A549 (cell line): ENCODE measurements at regions of chrX and their contacts with region 1.

Region 1: DNA sequence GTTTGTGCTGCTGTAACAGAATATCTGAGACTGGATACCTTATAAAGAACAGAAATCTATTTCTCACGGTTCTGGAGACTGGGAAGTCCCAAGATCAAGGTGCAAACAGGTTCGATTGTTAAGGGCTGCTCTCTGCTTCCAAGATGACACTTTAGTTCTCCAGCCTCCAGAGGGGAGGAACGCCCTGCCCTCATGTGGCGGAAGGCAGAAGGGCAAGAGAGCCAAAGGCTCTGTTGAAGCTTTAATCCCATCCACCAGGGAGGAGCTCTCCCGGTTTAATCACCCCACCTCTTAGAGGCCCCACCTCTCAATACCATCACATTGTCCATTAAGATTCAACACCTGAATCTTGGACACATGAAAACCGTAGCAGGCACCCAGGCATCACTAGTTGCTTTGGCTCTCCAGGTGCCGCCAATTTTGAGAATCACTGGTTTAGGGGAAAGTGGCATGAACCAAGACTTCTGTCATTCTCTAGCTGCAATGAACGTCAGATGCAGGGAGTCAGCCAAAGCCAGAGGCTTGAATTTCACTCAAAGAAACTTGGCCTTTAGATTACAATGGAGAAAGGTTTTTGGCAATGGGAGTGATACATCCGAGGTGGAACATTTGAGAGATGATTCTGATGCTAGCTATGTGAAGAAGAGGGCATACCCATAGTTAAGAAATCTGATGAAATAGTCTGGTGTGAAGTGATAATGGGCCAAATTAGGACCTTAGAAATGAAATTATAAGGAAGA is 15.7 kb downstream of the FHL1 start:
- DNase-seq: peak; percentile 59 to 60
- ATAC-seq: peak; percentile 99 to 100
- H3K4me3 ChIP-seq: no peak overlapping the region
- H3K27ac ChIP-seq: 0 out of 6 replicates have a peak overlapping the region, but pooled peaks of 1 of the 2 experiments have one; percentile 8
- H3K4me1 ChIP-seq: no peaks in the 10 kb centered on the region
- CTCF ChIP-seq: peak; percentile 62
- EP300 ChIP-seq: no peak
- POLR2A ChIP-seq: no peak
- RAD21 ChIP-seq: peak; percentile 61 to 70

Region 2: DNA sequence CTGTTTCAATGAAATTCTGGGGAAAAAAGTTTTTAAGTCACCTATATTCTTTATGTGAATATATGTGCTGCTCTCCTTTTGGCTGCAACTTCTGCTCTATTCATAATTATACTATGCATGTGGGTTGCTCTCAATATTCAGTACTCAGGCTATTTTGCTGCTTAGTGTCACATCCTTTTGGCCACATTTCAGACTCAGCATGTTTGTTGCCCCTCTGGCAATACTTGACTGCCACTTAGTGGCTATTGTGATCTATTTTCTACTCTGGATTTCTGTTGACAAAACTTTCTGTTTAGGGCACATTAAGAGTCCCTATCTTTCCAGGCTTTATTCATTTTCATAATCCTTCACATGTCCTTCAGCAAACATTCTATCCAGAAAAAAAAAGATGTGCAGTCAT is 465.4 kb before region 1 on chrX:
- CTCF ChIA-PET with region 1: no interaction called
- POLR2A ChIA-PET with region 1: no interaction called
- DNase-seq: no peak
- ATAC-seq: no peak
- H3K4me3 ChIP-seq: no peak overlapping the region
- H3K27ac ChIP-seq: no peak overlapping the region
- H3K4me1 ChIP-seq: no peaks in the 10 kb centered on the region
- CTCF ChIP-seq: 0 out of 3 replicates have a peak, but pooled peaks have one; percentile 9
- EP300 ChIP-seq: no peak
- POLR2A ChIP-seq: no peak
- RAD21 ChIP-seq: peak in 1 of 2 experiments; percentile 27; a peak in 2 of 5 replicates

Region 3: DNA sequence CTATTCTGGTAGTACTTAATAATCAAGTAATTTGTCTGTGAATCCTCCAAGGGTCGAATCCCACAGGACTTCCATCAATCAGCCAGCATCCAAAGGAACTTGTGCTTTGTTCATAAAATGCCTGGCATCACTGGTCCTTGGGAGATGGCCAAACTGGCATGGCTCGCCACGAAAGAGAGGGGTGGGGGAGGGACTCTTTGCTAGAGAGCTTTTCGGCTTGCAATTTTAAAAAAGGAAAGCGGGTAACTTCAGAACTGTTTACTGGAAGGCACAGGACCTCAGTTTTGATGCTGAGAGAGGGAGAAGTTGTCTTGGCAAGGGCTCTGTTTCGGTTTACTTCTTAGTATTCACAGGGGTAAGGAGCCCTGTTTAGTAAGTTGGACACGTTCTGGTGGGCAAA is 95.0 kb before region 1 on chrX:
- CTCF ChIA-PET with region 1: interaction called, 11 read pairs
- POLR2A ChIA-PET with region 1: no interaction called
- DNase-seq: no peak
- ATAC-seq: no peak
- H3K4me3 ChIP-seq: no peak overlapping the region
- H3K27ac ChIP-seq: no peak overlapping the region
- H3K4me1 ChIP-seq: no peaks in the 10 kb centered on the region
- CTCF ChIP-seq: no peak
- EP300 ChIP-seq: no peak
- POLR2A ChIP-seq: no peak
- RAD21 ChIP-seq: no peak

Region 4: GRCh38 chrX:136147315-136147901 is 15.6 kb before region 1 on chrX and contains the start of gene FHL1:
- CTCF ChIA-PET with region 1: interaction called, 11 read pairs
- POLR2A ChIA-PET with region 1: no interaction called
- DNase-seq: peak in 1 of 2 experiments; percentile 18
- ATAC-seq: peak; percentile 78 to 82
- H3K4me3 ChIP-seq: peak within 1 kb of the TSS; percentile 93
- H3K27ac ChIP-seq: peak within 1 kb of the TSS; percentile 87 to 98
- H3K4me1 ChIP-seq: no peaks in the 10 kb centered on the region; the same call in 1 of the 3 replicates
- CTCF ChIP-seq: no peak
- EP300 ChIP-seq: no peak
- POLR2A ChIP-seq: no peak
- RAD21 ChIP-seq: no peak
- polyA plus RNA-seq, gene FHL1: 32.2 and 38.5 TPM in 2 replicates

Region 5: DNA sequence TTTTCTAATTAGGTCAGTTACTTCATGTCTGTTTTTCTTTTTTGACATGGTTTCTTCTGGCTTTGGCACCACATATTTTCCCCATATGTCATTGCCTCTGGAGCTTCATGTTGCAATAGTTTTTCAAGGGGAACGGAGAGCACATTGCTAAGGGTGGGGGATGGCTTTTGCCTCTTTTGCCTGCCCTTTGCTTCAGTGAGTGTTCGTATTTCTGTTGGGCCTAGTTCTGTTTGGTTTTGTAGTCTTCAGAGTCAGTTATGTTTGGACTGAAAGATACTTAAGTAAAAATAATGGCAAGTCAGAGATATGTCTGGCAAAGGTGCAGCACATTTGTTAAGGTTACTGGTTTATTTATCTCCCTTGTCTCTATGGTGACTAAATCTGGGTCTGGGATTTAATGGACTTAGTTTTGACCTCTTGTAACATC is 13.4 kb after region 1 on chrX:
- CTCF ChIA-PET with region 1: interaction called, 14 read pairs
- POLR2A ChIA-PET with region 1: no interaction called
- DNase-seq: peak in 1 of 2 experiments; percentile 6
- ATAC-seq: peak in 1 of 2 experiments; percentile 42; a peak in 2 of 6 replicates
- H3K4me3 ChIP-seq: no peak overlapping the region
- H3K27ac ChIP-seq: peak overlapping the region in 1 of 2 experiments; percentile 67; a peak in 2 of 6 replicates
- H3K4me1 ChIP-seq: peaks cover 12% of the 10 kb centered on the region
- CTCF ChIP-seq: no peak
- EP300 ChIP-seq: no peak
- POLR2A ChIP-seq: no peak
- RAD21 ChIP-seq: no peak

Region 6: GRCh38 chrX:136199365-136199764 is 36.4 kb after region 1 on chrX:
- CTCF ChIA-PET with region 1: interaction called, 21 read pairs
- POLR2A ChIA-PET with region 1: no interaction called
- DNase-seq: no peak
- ATAC-seq: no peak
- H3K4me3 ChIP-seq: no peak overlapping the region
- H3K27ac ChIP-seq: no peak overlapping the region
- H3K4me1 ChIP-seq: peaks cover 33% of the 10 kb centered on the region
- CTCF ChIP-seq: no peak
- EP300 ChIP-seq: no peak
- POLR2A ChIP-seq: no peak
- RAD21 ChIP-seq: no peak

Region 7: DNA sequence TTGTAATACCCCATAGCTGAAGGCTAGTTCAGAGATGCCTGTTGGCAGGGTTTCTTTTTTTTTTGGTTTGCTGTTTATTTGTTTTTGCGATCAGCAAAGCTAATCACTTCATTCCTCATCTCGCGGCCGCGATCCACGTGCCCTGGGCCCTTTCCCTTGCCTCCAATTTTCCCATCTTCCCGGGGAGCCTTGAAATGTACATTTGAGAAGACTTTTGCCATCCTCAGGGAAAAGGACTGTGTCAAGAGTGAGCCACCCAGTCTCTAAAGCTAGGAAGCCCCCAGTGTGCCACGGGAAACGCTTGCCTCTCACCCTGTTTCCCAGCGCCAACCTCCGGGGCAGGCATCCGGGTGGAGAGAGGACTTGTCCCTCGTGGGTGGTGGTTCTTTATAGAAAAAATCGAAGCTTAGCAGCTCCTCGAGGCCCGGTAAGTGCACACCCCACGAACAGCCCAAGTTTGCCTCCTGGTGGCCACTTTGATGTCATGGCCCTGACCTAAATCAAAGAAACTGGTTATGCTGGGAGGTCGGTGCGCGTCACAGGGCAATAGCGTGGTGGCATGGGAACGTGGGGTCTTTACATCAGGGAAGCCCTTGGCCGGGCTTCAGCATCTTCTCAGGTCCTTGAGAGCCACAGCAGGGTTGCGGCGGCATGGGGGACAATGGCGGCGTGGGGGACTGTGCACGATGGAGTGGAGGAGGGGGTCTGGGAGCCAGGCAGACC is 46.2 kb after region 1 on chrX:
- CTCF ChIA-PET with region 1: interaction called, 21 read pairs
- POLR2A ChIA-PET with region 1: no interaction called
- DNase-seq: peak; percentile 43 to 60
- ATAC-seq: peak; percentile 84 to 90; a peak in 5 of 6 replicates
- H3K4me3 ChIP-seq: no peak overlapping the region
- H3K27ac ChIP-seq: peak overlapping the region in 1 of 2 experiments; percentile 17; a peak in 1 of 6 replicates
- H3K4me1 ChIP-seq: peaks cover 9% of the 10 kb centered on the region
- CTCF ChIP-seq: peak; percentile 52
- EP300 ChIP-seq: no peak
- POLR2A ChIP-seq: no peak
- RAD21 ChIP-seq: peak; percentile 62 to 65

Region 8: DNA sequence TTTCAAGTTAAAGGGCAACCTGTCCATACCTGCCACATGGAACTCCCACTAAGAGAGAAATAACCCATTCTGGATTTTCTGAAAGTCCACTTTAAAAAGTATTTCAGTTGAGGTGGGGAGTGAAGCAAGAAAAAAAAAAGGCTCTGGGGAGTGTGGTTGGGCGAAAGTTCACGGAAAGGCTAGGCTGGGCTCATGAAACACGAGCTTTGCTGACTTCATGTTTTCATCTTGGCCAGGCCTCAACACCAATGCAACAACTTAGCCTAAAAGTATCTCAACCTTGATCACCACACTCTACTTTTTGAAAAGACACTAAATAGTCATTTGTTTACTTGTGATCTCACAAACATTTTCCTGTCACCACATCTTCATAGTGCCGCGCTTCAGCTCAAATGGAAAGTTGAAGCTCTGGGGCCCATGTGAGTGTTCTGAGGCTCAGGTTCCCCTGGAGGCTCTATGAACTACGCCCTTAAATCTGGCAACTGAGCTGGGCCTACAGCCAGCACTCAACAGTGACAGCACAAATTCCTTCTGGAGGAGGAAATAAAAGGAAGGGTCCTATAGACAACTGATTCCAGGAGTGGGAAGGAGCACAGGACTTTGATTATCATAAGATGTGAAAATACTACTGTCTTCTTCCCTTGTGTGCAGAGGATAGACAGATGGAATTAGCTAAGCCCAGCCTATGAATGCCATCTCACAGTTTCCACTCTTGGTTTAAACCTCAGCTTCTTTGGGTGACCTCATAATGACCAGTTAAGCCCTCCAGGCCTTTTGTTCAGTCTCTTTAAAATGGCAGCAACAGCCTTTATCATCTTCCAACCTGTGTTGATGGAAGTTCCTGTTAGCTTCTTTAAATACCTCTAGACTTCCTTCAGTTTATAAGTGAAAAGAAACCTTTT is 490.1 kb after region 1 on chrX:
- CTCF ChIA-PET with region 1: no interaction called
- POLR2A ChIA-PET with region 1: no interaction called
- DNase-seq: no peak
- ATAC-seq: no peak
- H3K4me3 ChIP-seq: no peak overlapping the region
- H3K27ac ChIP-seq: no peak overlapping the region
- H3K4me1 ChIP-seq: no peaks in the 10 kb centered on the region
- CTCF ChIP-seq: no peak
- EP300 ChIP-seq: no peak
- POLR2A ChIP-seq: no peak
- RAD21 ChIP-seq: no peak